Mammary epithelial cell (primary cell): ENCODE measurements at regions of chr9 and their contacts with region 1.

Region 1: DNA sequence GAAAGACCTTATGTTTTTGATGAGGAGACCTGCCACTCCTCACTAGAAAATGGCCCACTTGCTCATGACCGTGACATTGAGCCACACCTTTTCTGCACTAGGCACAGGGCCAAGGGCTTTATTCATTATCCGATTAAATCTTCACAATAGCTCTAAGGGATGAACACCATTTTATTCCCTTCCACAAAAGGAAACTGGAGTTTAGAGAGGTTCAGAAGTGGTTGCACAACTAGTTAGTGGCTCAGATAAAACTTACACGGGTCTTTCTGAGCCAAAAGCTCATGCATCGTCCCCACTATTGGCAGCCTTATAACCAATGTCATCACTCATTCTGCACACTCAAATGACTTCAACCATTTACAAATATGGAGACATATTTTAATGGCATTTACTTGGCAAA is 39.4 kb downstream of the SUSD1 start:
- DNase-seq: peak; percentile 41
- H3K4me3 ChIP-seq: no peak overlapping the region
- H3K27ac ChIP-seq: no peak overlapping the region
- H3K4me1 ChIP-seq: peaks cover 3% of the 10 kb centered on the region
- H3K27me3 ChIP-seq: no peaks in the 10 kb centered on the region
- CTCF ChIP-seq: no peak

Region 2: GRCh38 chr9:112218908-112219307 is 83.2 kb after region 1 on chr9:
- CTCF ChIA-PET with region 1: no interaction called
- dilution Hi-C with region 1: loop called (anchors 5 kb)
- in situ Hi-C with region 1: no loop called
- intact Hi-C with region 1: no loop called
- DNase-seq: no peak
- H3K4me3 ChIP-seq: no peak overlapping the region
- H3K27ac ChIP-seq: no peak overlapping the region
- H3K4me1 ChIP-seq: no peaks in the 10 kb centered on the region
- H3K27me3 ChIP-seq: no peaks in the 10 kb centered on the region
- CTCF ChIP-seq: no peak